RWPE1 (cell line): ENCODE measurements at regions of chr1 and their contacts with region 1.

Region 1: GRCh38 chr1:195866091-195866780 is 742.0 kb downstream of the KCNT2 start:
- DNase-seq: no peak
- H3K27ac ChIP-seq: no peak overlapping the region
- CTCF ChIP-seq: no peak

Region 2: DNA sequence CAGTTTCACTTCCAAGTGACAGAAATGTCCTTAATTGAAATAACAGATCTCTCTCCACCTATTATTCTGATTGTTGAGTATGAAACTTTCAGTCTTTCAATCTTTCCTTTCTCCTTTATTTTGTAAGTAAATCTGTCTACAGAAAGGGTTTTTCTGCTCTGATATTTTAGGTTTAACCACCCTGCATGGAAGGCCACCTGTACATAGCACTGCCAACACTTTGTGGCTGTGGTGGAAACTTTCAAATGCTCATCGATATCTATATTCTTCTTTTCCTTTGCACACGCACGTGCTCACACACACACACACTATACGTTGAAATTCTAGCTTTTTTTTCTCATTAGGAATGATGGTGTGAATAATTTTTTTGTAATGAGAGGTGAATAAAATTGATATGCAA is 437.3 kb before region 1 on chr1:
- CTCF ChIA-PET with region 1: interaction called, 10 read pairs
- POLR2A ChIA-PET with region 1: no interaction called
- DNase-seq: no peak
- H3K27ac ChIP-seq: no peak overlapping the region
- CTCF ChIP-seq: no peak

Region 3: GRCh38 chr1:195886000-195886399 is 19.8 kb after region 1 on chr1:
- CTCF ChIA-PET with region 1: no interaction called
- POLR2A ChIA-PET with region 1: no interaction called
- DNase-seq: peak; percentile 13
- H3K27ac ChIP-seq: no peak overlapping the region
- CTCF ChIP-seq: no peak

Region 4: DNA sequence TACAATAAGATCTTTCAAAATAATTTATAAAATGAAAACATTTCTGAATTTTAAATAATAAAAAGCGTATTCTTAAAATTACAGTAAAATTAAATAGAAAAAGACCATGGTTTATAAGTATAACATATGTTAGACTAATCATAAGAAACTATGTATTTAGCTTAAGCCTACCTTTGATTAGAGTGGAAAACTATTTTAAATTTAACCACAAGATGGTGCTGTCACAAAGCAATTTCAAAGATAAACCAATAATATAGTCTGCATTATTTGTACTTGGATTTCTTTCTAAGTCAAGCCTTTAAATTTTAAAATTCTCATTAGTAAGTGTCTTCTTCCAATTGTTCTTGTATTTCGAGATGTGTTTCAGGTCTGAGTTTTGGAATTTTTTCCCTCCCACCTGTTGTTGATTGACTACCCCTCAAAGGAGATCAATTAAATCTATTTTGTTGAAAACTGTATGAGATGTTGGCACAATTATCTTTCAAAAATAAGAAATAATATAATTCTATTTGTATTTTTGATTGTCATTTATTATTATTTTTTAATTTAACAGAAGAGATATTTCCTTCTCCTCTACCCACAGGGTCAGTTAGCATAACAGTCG is 282.2 kb after region 1 on chr1:
- CTCF ChIA-PET with region 1: no interaction called
- POLR2A ChIA-PET with region 1: no interaction called
- DNase-seq: peak; percentile 32
- H3K27ac ChIP-seq: no peak overlapping the region
- CTCF ChIP-seq: peak; percentile 67